Activated T-helper 1 cell treated with anti-CD3 and anti-CD28 coated beads, Interleukin-12 subunit alpha, Interleukin-12 subunit beta, Interleukin-2, Interleukin-4 antibody, amounts not matched to agents 30 ng/mL and 10 ng/mL and 1 ng/mL, durations not matched to agents 14 hours and 24 hours and 36 hours (primary cell): ENCODE measurements at regions of chr1 and their contacts with region 1.

Region 1: DNA sequence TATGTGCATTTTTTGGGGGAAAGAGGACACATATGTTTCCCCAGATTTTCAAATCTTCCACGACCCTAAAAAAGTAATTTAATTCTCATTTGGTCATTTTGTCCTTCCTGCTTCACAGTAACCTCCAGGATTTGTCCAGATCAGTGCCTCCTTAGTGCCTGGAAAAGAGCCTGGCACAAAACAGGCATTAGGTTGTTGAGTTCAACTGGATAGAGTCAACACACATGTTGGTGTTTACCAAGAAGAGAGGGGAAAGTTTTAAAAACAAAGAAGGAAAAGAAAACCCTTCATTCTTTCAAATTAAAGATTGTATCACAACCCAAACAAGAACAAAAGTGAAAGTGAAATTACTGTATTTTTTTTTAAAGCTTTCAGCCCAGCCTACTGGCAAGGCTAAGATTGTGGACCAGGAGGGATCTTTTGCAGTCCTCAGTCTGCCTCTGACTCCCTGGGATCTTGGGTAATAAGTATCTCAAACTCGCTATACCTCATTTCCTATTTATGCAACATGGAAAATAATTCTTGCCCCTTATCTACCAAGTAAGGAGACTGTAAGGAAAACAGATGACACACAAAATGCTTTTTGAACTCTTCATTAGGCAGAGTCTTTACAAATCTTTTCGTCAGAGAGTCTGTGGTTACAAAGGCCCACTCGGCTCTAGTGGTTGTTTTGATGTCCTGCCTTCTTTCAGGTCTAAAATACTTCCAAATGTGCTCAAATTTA is 57.8 kb downstream of the ZNF281 start:
- DNase-seq: no peak
- H3K4me3 Mint-ChIP-seq: peak overlapping the region; percentile 68
- H3K27ac Mint-ChIP-seq: peak overlapping the region; percentile 77
- H3K4me1 Mint-ChIP-seq: peaks cover 51% of the 10 kb centered on the region
- H3K27me3 Mint-ChIP-seq: peaks cover 2% of the 10 kb centered on the region

Region 2: DNA sequence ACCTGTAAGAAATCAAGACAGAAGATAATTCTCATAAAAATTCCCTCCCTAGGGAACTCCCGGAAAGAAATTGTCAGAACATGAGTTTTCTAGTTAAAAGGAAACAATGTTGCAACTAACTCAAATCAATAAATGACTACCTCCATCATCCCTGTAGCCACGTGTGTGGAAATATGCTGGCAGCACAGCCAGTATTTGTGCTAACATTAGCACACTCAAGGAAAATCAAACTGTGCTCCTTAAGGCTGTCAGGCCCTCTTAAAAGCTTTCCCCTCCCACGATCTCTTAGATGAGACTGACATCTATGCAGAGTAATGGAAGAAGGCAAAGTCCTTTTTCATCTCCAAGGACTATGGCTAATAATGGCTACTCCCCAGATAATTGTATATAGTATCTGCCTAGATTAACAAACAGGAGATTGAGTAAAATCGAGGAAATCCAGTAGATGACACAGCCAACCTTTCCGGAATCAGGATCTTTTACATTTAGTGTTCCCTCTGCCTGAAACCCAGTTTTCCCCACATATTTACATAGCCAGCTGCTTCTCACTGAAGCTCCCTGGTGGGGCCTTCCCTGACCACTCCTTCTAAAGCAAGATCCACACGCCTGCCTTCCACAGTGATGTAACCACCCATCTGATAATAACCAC is 375.4 kb before region 1 on chr1:
- intact Hi-C with region 1: no loop called
- DNase-seq: no peak
- H3K4me3 Mint-ChIP-seq: no peak overlapping the region
- H3K27ac Mint-ChIP-seq: no peak overlapping the region
- H3K4me1 Mint-ChIP-seq: no peaks in the 10 kb centered on the region
- H3K27me3 Mint-ChIP-seq: peaks cover 14% of the 10 kb centered on the region

Region 3: GRCh38 chr1:200258447-200259375 is 93.3 kb before region 1 on chr1:
- intact Hi-C with region 1: loop called (anchors 5 kb)
- DNase-seq: no peak
- H3K4me3 Mint-ChIP-seq: no peak overlapping the region
- H3K27ac Mint-ChIP-seq: no peak overlapping the region
- H3K4me1 Mint-ChIP-seq: peaks cover 35% of the 10 kb centered on the region
- H3K27me3 Mint-ChIP-seq: peaks cover 14% of the 10 kb centered on the region

Region 4: GRCh38 chr1:200279810-200280411 is 72.1 kb before region 1 on chr1:
- intact Hi-C with region 1: no loop called
- DNase-seq: no peak
- H3K4me3 Mint-ChIP-seq: no peak overlapping the region
- H3K27ac Mint-ChIP-seq: no peak overlapping the region
- H3K4me1 Mint-ChIP-seq: no peaks in the 10 kb centered on the region
- H3K27me3 Mint-ChIP-seq: peaks cover 10% of the 10 kb centered on the region

Region 5: DNA sequence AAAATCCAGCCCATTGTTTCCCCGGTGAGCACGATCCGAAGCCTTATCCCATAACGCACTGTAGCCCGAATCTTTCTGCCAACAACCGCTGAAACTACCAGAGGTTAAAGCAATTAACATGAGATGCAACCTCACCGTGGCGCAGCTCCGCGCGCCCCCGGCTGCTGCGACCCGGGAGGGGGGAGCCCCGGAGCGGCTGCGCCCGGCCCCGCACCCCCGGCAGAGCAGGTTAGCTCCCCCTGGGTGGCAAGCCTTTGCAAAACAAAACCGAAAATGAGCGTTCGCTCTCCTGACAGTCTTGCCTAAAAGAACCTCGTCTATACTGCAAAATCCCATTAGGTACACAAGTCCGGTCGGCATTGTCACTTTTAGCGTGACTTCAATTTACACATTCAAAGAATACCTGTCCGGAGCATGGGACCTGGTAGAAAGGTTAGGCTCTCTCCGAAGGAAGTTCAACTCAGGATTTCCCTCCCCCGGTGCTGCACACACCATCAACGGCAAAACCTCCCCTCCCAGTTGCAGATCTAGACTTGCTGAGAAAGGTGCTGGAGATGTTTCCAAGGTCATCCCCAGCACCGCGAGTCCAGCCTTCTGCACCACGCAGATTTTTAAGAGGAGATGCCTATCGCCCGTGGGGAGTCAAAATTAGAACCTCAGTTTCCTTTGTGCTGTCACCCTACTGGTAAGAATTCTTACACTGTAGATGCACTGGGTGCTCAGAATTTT is 49.6 kb before region 1 on chr1:
- intact Hi-C with region 1: loop called (anchors 1 kb)
- DNase-seq: peak; percentile 53
- H3K4me3 Mint-ChIP-seq: peak overlapping the region; percentile 83
- H3K27ac Mint-ChIP-seq: no peak overlapping the region
- H3K4me1 Mint-ChIP-seq: peaks cover 23% of the 10 kb centered on the region
- H3K27me3 Mint-ChIP-seq: peaks cover 17% of the 10 kb centered on the region

Region 6: DNA sequence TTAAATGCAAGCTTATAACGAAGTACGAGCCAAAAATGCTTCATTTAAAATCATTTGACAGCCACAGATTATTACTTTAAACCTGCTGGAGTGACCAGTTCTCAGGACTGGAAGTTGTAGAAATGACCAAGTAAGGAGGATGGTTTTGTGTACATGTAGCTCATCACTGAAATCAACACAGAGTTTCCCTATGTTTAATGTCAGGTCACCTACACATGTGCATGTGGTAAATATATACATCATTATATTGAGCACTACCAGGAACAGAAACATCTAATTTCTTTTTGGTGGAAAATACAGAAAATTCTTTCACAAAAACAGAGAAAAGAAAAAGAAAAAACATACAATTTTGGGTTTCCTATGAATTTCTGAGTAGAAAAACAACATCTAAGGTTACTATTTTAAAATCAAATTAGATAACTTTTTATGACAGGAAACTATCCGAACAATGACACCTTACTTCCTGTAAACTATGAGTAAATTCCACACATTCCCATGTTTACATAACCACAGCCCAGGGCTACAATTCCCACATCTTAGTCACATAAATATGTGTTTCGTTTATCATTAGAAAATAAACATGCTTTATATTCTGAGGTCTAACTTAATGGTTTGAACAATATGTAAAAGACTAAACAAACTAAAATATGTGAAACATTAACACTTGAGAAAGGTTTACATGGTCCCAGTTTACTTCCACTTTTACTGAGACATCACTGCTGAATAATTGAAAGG is 15.7 kb before region 1 on chr1:
- intact Hi-C with region 1: loop called (anchors 2 kb)
- DNase-seq: no peak
- H3K4me3 Mint-ChIP-seq: no peak overlapping the region
- H3K27ac Mint-ChIP-seq: no peak overlapping the region
- H3K4me1 Mint-ChIP-seq: peaks cover 19% of the 10 kb centered on the region
- H3K27me3 Mint-ChIP-seq: no peaks in the 10 kb centered on the region

Region 7: DNA sequence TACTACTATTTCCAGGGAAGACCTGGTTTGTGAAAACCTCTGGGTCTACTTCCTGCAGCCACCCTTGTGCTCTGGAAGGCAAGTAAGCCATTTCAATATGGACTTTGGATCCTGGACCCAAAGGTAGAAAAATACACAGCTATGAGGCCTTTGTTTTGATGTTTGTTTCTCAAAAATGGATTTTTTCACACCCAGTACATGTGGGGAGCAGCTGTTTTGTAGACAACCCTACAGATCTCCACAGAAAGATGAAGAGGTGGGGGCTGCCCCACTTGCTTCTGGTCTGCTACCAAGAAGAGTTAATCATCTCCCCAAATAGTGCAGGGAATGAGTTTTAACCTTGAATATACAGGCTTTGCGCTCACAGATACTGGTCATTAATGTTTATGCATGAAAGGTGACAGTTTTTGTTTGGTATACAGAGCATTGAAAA is 28.6 kb after region 1 on chr1:
- intact Hi-C with region 1: loop called (anchors 1 kb)
- DNase-seq: no peak
- H3K4me3 Mint-ChIP-seq: no peak overlapping the region
- H3K27ac Mint-ChIP-seq: no peak overlapping the region
- H3K4me1 Mint-ChIP-seq: peaks cover 25% of the 10 kb centered on the region
- H3K27me3 Mint-ChIP-seq: no peaks in the 10 kb centered on the region

Region 8: DNA sequence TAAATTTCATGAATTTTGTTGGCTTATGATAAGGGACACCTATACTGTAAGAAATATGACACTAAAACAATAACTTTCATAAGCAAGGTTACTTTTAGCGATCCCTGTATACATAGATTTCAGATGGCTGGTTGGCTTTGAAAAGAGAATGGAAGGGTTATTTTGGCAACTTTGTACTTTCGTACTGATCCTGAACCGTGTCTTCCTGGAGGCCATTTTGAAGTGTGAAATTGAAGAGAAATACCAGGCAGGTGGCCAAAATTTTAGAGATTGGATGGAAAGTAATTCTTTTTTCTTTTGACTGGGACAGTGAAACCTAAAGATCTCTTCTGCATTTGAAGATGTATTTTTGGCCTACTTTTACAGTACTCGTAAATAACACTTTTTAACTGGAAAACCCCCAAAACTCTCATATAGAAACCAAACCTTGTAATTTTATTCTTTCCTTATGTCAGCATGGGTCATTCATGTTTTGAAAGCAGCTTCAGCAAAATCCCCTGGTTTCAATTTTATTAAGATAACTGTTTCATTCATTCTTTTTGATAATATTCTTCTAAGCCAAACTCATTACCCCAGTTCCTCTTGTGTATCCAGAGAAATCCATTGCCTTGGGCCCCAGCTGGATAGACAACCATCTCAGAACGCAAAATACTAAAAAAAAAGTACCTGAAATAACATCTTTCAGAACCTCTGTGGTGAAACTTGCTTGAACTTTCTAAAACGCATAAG is 96.2 kb after region 1 on chr1:
- intact Hi-C with region 1: loop called (anchors 1 kb)
- DNase-seq: no peak
- H3K4me3 Mint-ChIP-seq: peak overlapping the region; percentile 53
- H3K27ac Mint-ChIP-seq: peak overlapping the region; percentile 97
- H3K4me1 Mint-ChIP-seq: peaks cover 59% of the 10 kb centered on the region
- H3K27me3 Mint-ChIP-seq: no peaks in the 10 kb centered on the region

Region 9: GRCh38 chr1:200473698-200474371 is 121.8 kb after region 1 on chr1:
- intact Hi-C with region 1: loop called (anchors 2 kb)
- DNase-seq: no peak
- H3K4me3 Mint-ChIP-seq: peak overlapping the region; percentile 62
- H3K27ac Mint-ChIP-seq: peak overlapping the region; percentile 85
- H3K4me1 Mint-ChIP-seq: peaks cover 43% of the 10 kb centered on the region
- H3K27me3 Mint-ChIP-seq: peaks cover 2% of the 10 kb centered on the region